Activated B cell treated with CpG ODN at 0.5 μM for 24 hours (primary cell): ENCODE measurements at regions of chr17 and their contacts with region 1.

Region 1: GRCh38 chr17:2336215-2336851 is at the start of gene TSR1:
- DNase-seq: peak; percentile 85
- ATAC-seq: peak; percentile 79
- H3K4me3 Mint-ChIP-seq: peak within 1 kb of the TSS; percentile 99
- H3K27ac Mint-ChIP-seq: peak within 1 kb of the TSS; percentile 96
- H3K4me1 Mint-ChIP-seq: peaks cover 23% of the 10 kb centered on the region
- H3K27me3 Mint-ChIP-seq: no peaks in the 10 kb centered on the region
- CTCF ChIP-seq: no peak
- total RNA-seq, gene TSR1: 46.4 and 48.5 TPM in 2 replicates

Region 2: GRCh38 chr17:2303204-2304188 is 32.8 kb before region 1 on chr17 and contains the starts of genes SMG6 and SRR:
- CTCF ChIA-PET with region 1: interaction called, 3 read pairs
- POLR2A ChIA-PET with region 1: interaction called, 25 read pairs
- intact Hi-C with region 1: loop called (anchors 1 kb)
- DNase-seq: peak; percentile 87
- ATAC-seq: peak; percentile 90
- H3K4me3 Mint-ChIP-seq: peak within 1 kb of the TSS; percentile 88
- H3K27ac Mint-ChIP-seq: peak within 1 kb of the TSS; percentile 65
- H3K4me1 Mint-ChIP-seq: peaks cover 14% of the 10 kb centered on the region
- H3K27me3 Mint-ChIP-seq: no peaks in the 10 kb centered on the region
- CTCF ChIP-seq: no peak
- total RNA-seq, gene SMG6: 22.0 and 30.5 TPM in 2 replicates
- total RNA-seq, gene SRR: 5.7 and 8.6 TPM in 2 replicates

Region 3: DNA sequence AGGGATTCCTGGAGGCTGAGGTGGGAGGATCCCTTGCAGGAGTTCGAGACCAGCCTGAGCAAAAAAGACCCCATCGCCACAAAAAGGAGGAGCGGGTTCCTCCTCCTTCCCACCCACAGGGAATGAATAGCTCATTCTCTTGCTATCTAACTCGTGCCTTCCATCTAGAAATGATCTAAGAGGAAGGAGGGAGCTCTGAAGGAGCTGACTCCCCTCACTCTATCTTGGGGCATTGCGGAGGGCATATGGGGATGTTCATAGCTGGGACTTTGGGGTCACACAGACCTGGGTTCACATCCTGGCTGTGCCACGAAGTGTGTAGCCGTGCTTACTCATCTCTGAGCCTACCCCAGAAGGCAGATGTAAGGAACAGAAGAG is 12.0 kb after region 1 on chr17:
- CTCF ChIA-PET with region 1: interaction called, 3 read pairs
- POLR2A ChIA-PET with region 1: interaction called, 4 read pairs
- intact Hi-C with region 1: loop called (anchors 1 kb)
- DNase-seq: no peak
- ATAC-seq: no peak
- H3K4me3 Mint-ChIP-seq: no peak overlapping the region
- H3K27ac Mint-ChIP-seq: no peak overlapping the region
- H3K4me1 Mint-ChIP-seq: peaks cover 3% of the 10 kb centered on the region
- H3K27me3 Mint-ChIP-seq: no peaks in the 10 kb centered on the region
- CTCF ChIP-seq: no peak